Lower leg skin (tissue), 4 donors: ENCODE measurements at regions of chr16 and their contacts with region 1.

Region 1: GRCh38 chr16:84062734-84063640 is 20.4 kb upstream of the SLC38A8 start:
- DNase-seq: peak; percentile 42 to 92
- H3K4me3 ChIP-seq: no peak overlapping the region
- CTCF ChIP-seq: peak in 1 of 3 donors; percentile 43
- POLR2A ChIP-seq: no peak

Region 2: DNA sequence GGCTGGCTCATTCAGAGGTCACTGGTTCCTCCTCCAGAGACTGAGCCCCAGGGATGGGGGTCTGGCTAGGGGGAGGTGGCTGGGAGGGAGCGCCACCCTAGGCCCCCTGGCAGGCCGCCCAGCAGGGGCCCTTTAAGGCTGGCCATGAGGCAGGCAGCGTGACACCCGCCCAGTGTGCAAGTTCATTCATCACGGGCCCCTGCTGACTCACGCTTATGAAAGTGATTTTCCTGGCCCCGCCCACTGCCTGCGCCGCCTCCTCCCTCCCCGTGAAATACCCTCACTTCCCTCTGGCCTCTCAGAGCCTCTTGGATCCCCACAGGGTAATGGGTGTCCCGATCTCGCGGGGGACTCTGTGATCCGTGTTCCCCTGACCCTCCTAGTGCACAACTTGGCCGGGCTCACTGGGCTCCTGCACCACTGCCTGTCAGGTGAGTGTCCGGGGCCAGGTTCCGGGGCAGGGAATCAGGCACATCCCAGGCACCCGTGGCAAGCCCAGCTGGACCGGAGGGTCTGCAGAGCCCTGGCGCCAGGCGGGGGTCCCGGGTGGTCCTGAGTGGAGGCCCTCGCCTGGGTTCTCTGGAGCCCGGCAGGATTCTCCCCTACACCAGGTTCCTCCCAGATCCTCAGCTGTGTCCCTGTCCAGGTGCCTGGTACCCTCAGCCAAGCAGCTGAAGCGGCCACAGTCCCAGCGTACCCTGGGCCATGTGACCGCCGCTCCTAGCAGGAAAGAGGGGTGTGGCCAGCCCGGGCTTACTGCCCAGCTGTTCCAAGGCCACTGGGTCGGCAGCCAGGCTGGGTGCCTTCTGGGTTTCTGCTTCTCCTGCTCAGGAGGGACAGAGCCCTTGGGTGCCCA is 109.8 kb before region 1 on chr16 and contains the start of gene OSGIN1:
- intact Hi-C with region 1: loop called (anchors 10 kb)
- DNase-seq: peak; percentile 96 to 99
- H3K4me3 ChIP-seq: peak within 1 kb of the TSS; percentile 34
- CTCF ChIP-seq: no peak
- POLR2A ChIP-seq: no peak
- total RNA-seq, gene OSGIN1: 1.1 to 3.2 (median 2.4) TPM